Activated CD4-positive, alpha-beta T cell treated with anti-CD3 and anti-CD28 coated beads, Interleukin-2, amount 10 ng/mL, durations not matched to agents 24 days and 14 days (primary cell): ENCODE measurements at regions of chr1 and their contacts with region 1.

Region 1: GRCh38 chr1:88661951-88662699 is 21.9 kb upstream of the PKN2 start:
- DNase-seq: no peak
- H3K4me3 Mint-ChIP-seq: no peak overlapping the region
- H3K27ac Mint-ChIP-seq: no peak overlapping the region
- H3K4me1 Mint-ChIP-seq: peaks cover 22% of the 10 kb centered on the region
- H3K27me3 Mint-ChIP-seq: peaks cover 8% of the 10 kb centered on the region

Region 2: DNA sequence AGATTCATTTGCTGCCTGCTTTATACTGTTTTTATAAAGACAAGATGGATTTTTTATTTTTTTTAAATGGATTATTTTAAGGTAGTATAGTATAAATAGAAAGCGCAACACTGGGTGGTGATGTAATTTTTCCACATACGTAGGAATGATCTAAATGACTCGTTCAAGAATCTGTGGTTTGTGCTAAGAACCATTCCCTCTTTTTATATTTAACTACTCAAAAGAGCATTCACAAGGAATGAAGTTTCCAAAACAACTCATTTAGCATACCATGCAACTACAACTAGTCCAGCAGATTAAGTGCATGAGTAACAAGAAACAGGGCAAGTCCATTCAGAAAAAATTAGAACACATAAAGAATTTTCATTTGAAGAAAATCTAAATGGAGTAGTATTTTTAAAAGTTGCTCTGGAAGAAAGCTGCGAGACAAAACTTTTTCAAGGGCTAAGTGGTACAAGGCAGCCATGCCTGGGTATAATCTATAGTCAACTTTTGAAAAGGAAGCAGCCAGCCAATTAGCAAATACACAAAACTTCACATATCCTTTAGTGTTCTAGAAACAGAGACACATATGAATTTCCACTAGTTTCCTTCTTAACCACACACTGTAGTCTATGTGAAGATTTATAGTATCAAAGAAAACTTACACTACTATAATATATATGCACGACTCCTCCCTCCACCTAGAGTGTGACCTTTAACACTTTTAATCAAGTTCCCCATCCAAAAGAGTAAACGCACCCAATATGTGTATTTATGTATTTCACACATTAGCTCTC is 205.8 kb after region 1 on chr1:
- intact Hi-C with region 1: loop called (anchors 5 kb)
- DNase-seq: no peak
- H3K4me3 Mint-ChIP-seq: peak overlapping the region; percentile 69
- H3K27ac Mint-ChIP-seq: peak overlapping the region; percentile 82
- H3K4me1 Mint-ChIP-seq: peaks cover 36% of the 10 kb centered on the region
- H3K27me3 Mint-ChIP-seq: no peaks in the 10 kb centered on the region

Region 3: DNA sequence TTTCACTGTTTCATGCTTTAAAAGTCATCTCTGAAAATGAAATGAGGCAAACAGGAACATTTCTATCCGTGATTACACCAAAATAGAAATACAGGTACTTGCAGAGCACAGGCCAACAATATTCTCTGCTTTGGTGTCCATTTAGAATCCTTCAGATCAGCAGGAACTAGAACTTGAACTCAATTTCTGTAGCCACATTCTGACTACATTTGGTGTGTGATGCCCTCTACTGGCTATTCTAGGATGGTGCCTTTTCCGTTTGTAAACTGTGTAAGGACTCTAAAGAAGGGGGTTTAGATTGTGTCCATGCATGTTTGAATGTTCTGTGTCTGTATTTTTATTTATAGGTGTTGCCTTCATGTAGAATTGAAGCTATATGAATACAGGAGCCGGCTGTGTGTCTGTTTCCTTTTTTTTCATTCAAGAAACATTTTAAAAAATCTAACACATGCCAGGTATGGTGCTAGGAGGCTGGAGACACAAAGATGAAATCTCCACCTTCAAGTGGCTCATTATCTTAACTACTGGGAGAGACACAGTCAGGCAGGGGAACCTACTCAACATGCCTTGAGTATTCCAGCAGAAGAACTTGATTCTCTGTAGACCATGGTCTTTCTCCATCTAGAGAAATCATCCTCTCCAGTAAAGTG is 1325.2 kb after region 1 on chr1:
- intact Hi-C with region 1: no loop called
- DNase-seq: peak; percentile 90
- H3K4me3 Mint-ChIP-seq: no peak overlapping the region
- H3K27ac Mint-ChIP-seq: no peak overlapping the region
- H3K4me1 Mint-ChIP-seq: peaks cover 12% of the 10 kb centered on the region
- H3K27me3 Mint-ChIP-seq: peaks cover 11% of the 10 kb centered on the region